Posterior cingulate gyrus (tissue), 11 donors: ENCODE measurements at regions of chr11 and their contacts with region 1.

Region 1: GRCh38 chr11:65615229-65615941 is at the start of gene PCNX3:
- DNase-seq: peak; percentile 100

Region 2: DNA sequence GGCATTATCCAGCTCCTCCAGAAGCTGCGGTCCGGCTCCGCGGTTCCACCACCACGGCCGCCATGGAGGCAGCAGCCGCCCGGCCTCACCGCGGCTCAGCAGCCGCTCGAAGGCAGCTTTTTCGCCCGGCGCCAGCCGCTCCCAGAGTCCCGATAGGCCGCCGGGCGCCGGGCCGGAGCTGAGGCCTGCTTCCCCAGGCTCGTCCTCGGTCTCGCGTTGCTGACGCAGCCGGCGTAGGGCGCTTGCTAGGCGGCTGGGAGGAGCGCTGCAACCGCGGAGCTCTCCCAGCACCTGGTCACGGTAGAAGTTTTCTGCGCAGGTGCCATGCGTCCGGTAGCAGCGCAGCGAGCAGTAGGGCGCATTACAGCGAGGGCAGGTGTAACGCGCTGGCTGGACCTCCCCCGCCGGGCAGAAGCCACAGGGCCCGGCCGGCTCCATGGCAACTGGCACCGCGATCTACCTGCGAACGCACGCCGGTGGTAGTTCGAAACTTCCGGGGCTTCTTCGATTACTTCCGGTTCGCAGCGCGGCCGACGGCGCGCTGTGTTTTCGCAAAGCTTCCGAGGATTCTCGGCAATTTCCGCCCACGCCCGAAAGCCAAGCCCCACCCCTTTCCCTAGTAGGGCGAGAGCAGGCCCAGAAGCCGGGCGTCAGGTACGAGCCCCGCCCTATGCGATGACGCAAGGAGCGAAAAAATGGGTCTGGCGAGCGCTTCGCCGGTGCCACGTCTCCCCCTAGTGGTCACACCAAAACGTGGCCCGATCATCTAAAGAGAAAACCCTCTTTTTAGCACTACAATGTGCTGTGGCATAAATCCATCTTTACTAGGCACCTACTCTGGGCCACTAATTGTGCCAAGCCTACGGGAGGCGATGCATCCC is 497.9 kb before region 1 on chr11 and contains the start of gene ZNHIT2:
- intact Hi-C with region 1: no loop called
- DNase-seq: peak; percentile 99 to 100 (median 100)

Region 3: GRCh38 chr11:65652511-65653231 is 37.3 kb after region 1 on chr11:
- intact Hi-C with region 1: loop called (anchors 5 kb)
- DNase-seq: peak; percentile 83 to 98 (median 88)

Region 4: GRCh38 chr11:65662799-65663638 is 47.6 kb after region 1 on chr11 and contains the start of gene RELA:
- intact Hi-C with region 1: loop called (anchors 2 kb)
- DNase-seq: peak; percentile 92 to 99 (median 94)

Region 5: DNA sequence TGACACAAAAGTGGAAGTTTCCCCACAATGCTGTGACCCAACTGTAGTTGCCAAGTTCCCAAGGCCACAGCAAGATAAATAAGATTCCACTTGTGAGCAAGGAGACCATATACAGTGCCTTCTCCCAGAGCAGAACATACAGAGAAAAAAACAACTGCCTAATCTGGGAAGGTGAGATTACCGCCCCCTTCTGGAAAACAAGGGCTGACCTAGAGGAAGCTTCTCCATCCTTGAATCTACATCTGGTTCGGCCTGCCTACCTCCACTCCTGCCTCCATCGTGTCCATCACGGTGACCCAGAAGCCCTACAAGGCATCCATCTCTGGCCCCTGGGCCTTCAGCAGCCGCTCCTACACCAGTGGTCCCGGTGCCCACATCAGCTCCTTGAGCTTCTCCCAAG is 111.3 kb after region 1 on chr11:
- intact Hi-C with region 1: no loop called
- DNase-seq: no peak